ENCODE measurements at regions of chr11 and their contacts with region 1.

Region 1: DNA sequence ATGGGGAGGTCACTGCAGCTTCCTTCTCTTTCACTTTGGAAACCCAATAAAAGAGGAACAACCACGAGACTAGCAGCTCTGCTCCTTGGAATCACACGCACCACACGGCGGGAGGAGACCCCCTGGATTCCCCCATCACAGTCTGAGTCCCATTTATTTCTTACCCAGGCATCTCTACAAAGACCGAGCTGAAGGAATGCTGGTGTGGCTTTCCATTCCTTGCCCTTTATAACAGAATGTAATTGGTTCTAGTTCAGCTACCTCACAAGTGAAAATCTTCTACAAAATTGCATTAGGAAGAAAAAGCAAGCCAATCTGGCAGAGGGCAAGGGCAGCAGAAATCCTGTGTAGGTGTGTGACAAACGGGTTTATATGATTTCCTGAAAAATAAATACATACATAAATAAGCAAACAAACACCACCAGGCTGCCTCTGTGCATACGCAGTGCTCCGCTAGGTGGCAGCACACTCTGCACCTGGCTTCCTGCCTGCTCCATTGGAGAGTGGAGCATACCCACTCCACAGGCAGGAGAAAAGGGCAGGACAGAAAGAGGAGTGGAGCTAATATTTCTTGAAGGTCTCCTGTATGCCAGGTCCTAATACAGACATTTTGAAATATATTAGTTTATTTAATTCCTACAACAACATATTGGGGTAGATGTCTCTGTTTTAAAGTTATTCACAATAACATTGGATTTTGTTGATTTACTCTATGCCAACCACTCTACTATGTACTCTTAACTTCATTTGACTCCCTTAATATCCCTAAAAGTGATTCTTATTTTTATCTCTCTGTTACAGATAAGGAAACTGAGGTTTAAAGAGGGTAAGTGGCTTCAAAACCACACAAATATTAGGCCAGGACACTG is 673.1 kb downstream of the KCNA4 start:
- DNase-seq: peak; percentile 36
- H3K4me3 ChIP-seq: peak overlapping the region; percentile 24 to 49
- H3K27ac ChIP-seq: no peak overlapping the region
- H3K4me1 ChIP-seq: no peaks in the 10 kb centered on the region
- H3K27me3 ChIP-seq: no peaks in the 10 kb centered on the region
- CTCF ChIP-seq: peak; percentile 96
- EP300 ChIP-seq: no peak
- RAD21 ChIP-seq: peak; percentile 52

Region 2: GRCh38 chr11:29328961-29329441 is 14.7 kb before region 1 on chr11:
- CTCF ChIA-PET with region 1: interaction called, 29 read pairs
- POLR2A ChIA-PET with region 1: no interaction called
- DNase-seq: peak; percentile 1
- H3K4me3 ChIP-seq: no peak overlapping the region
- H3K27ac ChIP-seq: peak overlapping the region in 1 of 2 experiments; percentile 55; a peak in 2 of 4 replicates
- H3K4me1 ChIP-seq: peaks cover 0 to 31% of the 10 kb centered on the region in 2 experiments; a peak in 1 of 4 replicates
- H3K27me3 ChIP-seq: no peaks in the 10 kb centered on the region
- CTCF ChIP-seq: peak; percentile 86
- EP300 ChIP-seq: peak in 1 of 2 experiments; percentile 32; a peak in 1 of 4 replicates
- RAD21 ChIP-seq: peak; percentile 64

Region 3: GRCh38 chr11:29634248-29634647 is 290.5 kb after region 1 on chr11:
- CTCF ChIA-PET with region 1: no interaction called
- POLR2A ChIA-PET with region 1: no interaction called
- DNase-seq: no peak
- H3K4me3 ChIP-seq: no peak overlapping the region
- H3K27ac ChIP-seq: no peak overlapping the region
- H3K4me1 ChIP-seq: no peaks in the 10 kb centered on the region
- H3K27me3 ChIP-seq: no peaks in the 10 kb centered on the region
- CTCF ChIP-seq: peak; percentile 51
- EP300 ChIP-seq: no peak
- RAD21 ChIP-seq: no peak; the same call in 1 of the 2 replicates

Region 4: GRCh38 chr11:29900382-29900781 is 556.7 kb after region 1 on chr11:
- CTCF ChIA-PET with region 1: no interaction called
- POLR2A ChIA-PET with region 1: no interaction called
- DNase-seq: no peak
- H3K4me3 ChIP-seq: no peak overlapping the region
- H3K27ac ChIP-seq: no peak overlapping the region
- H3K4me1 ChIP-seq: no peaks in the 10 kb centered on the region
- H3K27me3 ChIP-seq: no peaks in the 10 kb centered on the region
- CTCF ChIP-seq: no peak
- EP300 ChIP-seq: no peak
- RAD21 ChIP-seq: no peak

Measured in SK-N-SH (cell line).